ENCODE measurements at regions of chr9 and their contacts with region 1.

Region 1: DNA sequence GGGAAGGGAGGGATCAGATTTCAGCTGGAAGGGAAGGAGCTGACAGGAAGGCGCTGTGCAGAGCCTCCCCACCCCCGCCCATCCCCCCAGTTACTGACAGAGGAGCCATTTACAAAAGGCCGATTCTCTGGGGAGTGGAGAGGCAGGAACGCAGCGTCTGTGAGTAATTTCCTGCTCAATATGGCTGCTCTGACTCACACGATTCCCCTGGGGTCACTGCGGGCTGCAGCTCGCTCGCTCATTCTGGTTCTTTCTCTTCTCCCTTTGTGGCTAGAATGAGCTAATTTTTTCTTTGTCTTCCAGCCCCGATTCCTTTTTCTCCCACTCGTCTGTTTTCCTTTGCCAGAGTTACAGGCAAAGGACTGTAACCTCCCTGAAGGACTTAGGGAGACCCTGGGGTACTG is 28.8 kb downstream of the PTPA start:
- DNase-seq: peak; percentile 51 to 88 (median 66)
- ATAC-seq: peak; percentile 86
- H3K4me3 Mint-ChIP-seq: peak overlapping the region; percentile 83 to 96 (median 92)
- H3K27ac Mint-ChIP-seq: peak overlapping the region; percentile 92 to 99 (median 98)
- H3K4me1 Mint-ChIP-seq: peaks cover 16 to 43% (median 34%) of the 10 kb centered on the region in 4 donors
- H3K27me3 Mint-ChIP-seq: no peaks in the 10 kb centered on the region

Region 2: DNA sequence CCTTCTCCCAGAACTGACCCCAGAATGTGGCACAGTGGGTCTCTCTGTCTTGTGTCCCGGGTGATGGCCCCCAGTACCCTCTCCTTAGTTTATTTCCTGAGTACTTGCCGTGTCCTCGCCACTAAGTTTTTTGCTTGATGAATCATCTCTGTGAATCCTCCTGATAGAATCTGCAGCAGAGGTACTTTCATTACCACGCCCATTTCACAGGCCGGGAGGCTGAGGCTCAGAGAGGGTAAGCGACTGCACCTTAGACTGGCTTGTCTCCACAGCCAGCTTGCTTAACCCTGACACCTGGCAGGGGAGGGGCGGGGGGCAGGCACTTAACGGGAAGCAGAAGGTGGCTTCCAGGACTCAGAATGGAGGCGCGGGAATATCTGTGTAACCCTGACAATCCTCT is 46.0 kb after region 1 on chr9:
- POLR2A ChIA-PET with region 1: no interaction called
- DNase-seq: no peak
- ATAC-seq: no peak
- H3K4me3 Mint-ChIP-seq: no peak overlapping the region
- H3K27ac Mint-ChIP-seq: no peak overlapping the region
- H3K4me1 Mint-ChIP-seq: peaks cover 0 to 3% (median 0%) of the 10 kb centered on the region in 4 donors
- H3K27me3 Mint-ChIP-seq: no peaks in the 10 kb centered on the region

Region 3: DNA sequence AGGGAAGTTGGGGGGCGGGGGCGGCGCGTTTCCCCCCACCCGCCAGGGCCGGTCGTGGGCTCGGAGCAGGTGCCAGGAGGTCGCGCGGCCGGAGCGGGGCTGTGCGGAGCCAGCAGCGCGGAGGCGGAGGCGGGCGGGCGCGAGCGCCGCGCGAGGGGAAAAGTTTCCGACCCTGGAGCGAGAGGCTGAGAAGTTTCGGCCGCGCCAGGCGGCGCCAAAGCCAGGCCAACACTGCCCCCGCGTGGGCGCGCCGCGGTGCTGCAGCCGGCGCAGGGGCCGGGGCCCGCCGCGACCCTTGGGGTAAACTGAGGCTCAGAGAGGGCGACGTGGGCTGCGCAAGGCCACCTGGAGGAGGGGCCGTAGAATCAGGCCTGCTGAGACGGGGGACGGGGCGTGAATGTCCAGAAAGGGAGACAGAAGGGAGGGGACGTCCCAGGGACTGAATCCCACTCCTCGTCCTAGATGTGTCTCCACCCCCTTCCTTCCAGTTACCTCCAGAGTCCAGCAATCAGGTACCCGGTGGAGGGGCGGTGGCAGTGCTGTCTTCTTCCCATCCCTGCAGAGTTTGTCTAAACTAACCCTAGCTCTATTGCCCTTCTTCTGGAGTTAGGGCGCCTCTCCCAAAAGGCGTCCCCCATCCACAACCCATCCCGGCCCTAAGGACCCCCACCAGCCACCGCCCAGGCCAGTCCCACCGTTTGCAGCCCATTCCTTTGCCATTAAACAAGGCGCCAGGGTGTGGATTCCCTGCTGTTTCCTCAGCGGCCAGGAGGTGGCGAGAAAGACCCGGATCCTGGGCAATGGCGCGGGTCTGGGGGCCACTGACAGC is 470.7 kb after region 1 on chr9:
- POLR2A ChIA-PET with region 1: interaction called, 35 read pairs
- DNase-seq: peak; percentile 59 to 82 (median 72)
- ATAC-seq: peak; percentile 73
- H3K4me3 Mint-ChIP-seq: peak overlapping the region; percentile 75 to 91 (median 80)
- H3K27ac Mint-ChIP-seq: peak overlapping the region in 8 of 10 donors; percentile 14 to 91 (median 68)
- H3K4me1 Mint-ChIP-seq: peaks cover 10 to 44% (median 38%) of the 10 kb centered on the region in 4 donors
- H3K27me3 Mint-ChIP-seq: peaks cover 0 to 1% (median 0%) of the 10 kb centered on the region in 5 donors